ENCODE measurements at regions of chr16 and their contacts with region 1.

Region 1: DNA sequence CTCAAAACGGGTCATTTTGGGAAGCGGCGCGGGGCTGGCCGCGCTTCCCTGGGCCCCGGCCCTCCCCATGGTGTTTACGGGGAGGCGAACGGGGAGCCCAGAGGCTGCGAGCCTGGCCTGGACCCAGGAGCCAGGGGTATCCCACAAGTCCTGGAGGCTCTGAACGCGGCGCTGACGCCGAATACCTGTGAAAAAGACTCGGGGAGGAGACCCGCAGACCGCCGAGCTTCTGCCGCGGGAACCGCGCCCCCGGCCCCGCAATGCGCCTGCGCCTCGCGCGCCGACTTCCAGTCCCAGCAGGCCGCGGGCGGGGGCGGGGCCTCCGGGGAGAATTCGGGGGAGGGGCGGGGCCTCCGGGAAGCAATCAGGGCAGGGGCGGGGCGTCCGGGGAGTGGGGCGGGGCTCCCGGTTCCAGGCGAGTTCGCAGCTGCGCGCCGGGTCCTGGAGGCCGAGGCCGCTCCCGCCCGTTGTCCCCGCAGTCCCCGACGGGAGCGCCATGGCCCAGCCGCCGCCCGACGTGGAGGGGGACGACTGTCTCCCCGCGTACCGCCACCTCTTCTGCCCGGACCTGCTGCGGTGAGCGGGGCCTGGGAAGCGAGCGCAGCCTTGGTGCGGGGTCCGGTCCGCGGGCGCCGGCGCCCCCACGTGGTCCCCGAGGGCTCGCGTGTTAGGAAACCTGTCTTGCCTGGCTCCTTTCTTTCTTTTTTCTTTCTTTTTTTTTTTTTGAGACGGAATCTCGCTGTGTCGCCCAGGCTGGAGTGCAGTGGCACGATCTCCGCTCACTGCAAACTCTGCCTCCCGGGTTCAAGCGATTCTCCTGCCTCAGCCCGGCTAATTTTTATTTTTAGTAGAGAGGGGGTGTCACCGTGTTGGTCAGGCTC is at the start of gene DECR2:
- DNase-seq: peak; percentile 93
- ATAC-seq: peak; percentile 83 to 84
- H3K4me3 ChIP-seq: peak within 1 kb of the TSS; percentile 85 to 98 (median 91)
- H3K27ac ChIP-seq: peak within 1 kb of the TSS; percentile 88 to 98 (median 96)
- H3K4me1 ChIP-seq: peaks cover 16 to 18% of the 10 kb centered on the region in 2 donors
- H3K27me3 ChIP-seq: no peaks in the 10 kb centered on the region
- CTCF ChIP-seq: peak in 4 of 5 experiments; percentile 45 to 55 (median 50)
- POLR2A ChIP-seq: peak; percentile 89 to 93
- total RNA-seq, gene DECR2: 17.0 to 23.3 (median 18.8) TPM

Region 2: DNA sequence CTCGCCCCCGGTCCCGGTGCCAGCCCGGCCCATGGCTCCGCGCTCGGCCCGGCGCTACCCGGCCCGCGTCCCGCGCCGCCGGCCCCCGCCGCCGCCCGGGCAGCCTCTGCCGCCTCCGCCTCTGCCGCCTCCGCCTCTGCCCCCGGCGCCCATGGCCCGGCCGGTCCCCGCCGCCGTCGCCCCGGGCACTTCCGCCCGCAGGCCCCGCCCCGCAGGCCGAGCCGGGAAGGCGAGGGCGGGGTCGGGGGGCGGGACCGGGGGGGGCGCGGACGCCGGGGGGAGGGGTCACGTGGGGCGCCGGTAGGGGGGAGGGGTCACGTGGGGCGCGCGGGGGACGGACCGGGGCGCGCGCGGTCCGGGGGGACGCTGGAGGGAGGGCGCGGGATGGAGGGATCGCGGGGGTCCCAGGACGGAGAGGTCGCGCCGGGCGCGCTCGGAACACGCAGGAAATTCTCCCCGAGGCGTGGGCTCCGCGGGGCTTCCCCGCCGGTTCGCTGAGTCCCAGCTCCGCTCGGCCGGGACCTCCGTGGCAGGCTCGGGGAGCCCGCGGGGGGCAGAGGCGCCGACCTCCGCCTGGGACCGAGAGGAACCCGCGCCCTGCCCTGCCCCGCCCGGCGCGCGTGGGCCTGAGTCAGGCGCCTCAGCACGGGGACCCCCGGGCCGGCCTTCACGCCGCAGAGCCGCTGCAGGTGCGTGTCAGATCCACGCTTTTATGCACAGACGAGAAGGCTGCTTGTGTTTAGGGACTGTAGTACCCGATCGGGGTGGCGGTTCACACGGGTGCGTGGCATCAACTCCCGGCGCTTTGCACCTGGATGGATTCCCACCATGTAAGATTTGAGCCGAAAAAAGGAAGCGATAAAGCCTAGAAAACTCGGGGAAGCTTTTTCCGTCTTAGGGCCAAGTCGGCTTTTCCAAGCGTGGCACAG is 19.7 kb before region 1 on chr16 and contains the start of gene PGAP6:
- in situ Hi-C with region 1: no loop called
- intact Hi-C with region 1: loop called (anchors 1 kb)
- DNase-seq: peak; percentile 58 to 66
- ATAC-seq: peak; percentile 80 to 83
- H3K4me3 ChIP-seq: peak within 1 kb of the TSS; percentile 73 to 96 (median 80)
- H3K27ac ChIP-seq: peak within 1 kb of the TSS; percentile 87 to 95 (median 88)
- H3K4me1 ChIP-seq: peaks cover 28 to 39% of the 10 kb centered on the region in 2 donors
- H3K27me3 ChIP-seq: no peaks in the 10 kb centered on the region
- CTCF ChIP-seq: no peak
- POLR2A ChIP-seq: peak; percentile 70 to 75
- total RNA-seq, gene PGAP6: 31.5 to 63.3 (median 50.8) TPM

Region 3: GRCh38 chr16:477758-478157 is 76.0 kb after region 1 on chr16:
- in situ Hi-C with region 1: no loop called
- intact Hi-C with region 1: loop called (anchors 5 kb)
- DNase-seq: peak; percentile 75 to 85
- ATAC-seq: peak; percentile 97
- H3K4me3 ChIP-seq: no peak overlapping the region
- H3K27ac ChIP-seq: peak overlapping the region; percentile 81 to 89 (median 88)
- H3K4me1 ChIP-seq: peaks cover 5% of the 10 kb centered on the region in 2 donors
- H3K27me3 ChIP-seq: no peaks in the 10 kb centered on the region
- CTCF ChIP-seq: no peak
- POLR2A ChIP-seq: peak in 1 of 2 donors; percentile 53

Region 4: GRCh38 chr16:842061-842476 is 440.4 kb after region 1 on chr16:
- in situ Hi-C with region 1: no loop called
- intact Hi-C with region 1: no loop called
- DNase-seq: no peak
- ATAC-seq: no peak
- H3K4me3 ChIP-seq: no peak overlapping the region
- H3K27ac ChIP-seq: no peak overlapping the region
- H3K4me1 ChIP-seq: no peaks in the 10 kb centered on the region
- H3K27me3 ChIP-seq: peaks cover 8 to 16% (median 13%) of the 10 kb centered on the region in 3 donors
- CTCF ChIP-seq: no peak
- POLR2A ChIP-seq: no peak

Measured in gastrocnemius medialis (tissue), 4 donors.